ENCODE measurements at regions of chr20 and their contacts with region 1.

Region 1: GRCh38 chr20:5191829-5192569 is 65.2 kb downstream of the CDS2 start:
- DNase-seq: peak; percentile 81 to 89
- ATAC-seq: peak; percentile 72 to 87
- H3K4me3 ChIP-seq: no peak overlapping the region
- H3K27ac ChIP-seq: peak overlapping the region in 1 of 2 experiments; percentile 35; a peak in 1 of 6 replicates
- H3K4me1 ChIP-seq: 0 out of 3 replicates have a peak, but pooled peaks cover 3% of the 10 kb centered on the region
- CTCF ChIP-seq: peak; percentile 96
- EP300 ChIP-seq: no peak
- POLR2A ChIP-seq: no peak
- RAD21 ChIP-seq: peak; percentile 92 to 94

Region 2: DNA sequence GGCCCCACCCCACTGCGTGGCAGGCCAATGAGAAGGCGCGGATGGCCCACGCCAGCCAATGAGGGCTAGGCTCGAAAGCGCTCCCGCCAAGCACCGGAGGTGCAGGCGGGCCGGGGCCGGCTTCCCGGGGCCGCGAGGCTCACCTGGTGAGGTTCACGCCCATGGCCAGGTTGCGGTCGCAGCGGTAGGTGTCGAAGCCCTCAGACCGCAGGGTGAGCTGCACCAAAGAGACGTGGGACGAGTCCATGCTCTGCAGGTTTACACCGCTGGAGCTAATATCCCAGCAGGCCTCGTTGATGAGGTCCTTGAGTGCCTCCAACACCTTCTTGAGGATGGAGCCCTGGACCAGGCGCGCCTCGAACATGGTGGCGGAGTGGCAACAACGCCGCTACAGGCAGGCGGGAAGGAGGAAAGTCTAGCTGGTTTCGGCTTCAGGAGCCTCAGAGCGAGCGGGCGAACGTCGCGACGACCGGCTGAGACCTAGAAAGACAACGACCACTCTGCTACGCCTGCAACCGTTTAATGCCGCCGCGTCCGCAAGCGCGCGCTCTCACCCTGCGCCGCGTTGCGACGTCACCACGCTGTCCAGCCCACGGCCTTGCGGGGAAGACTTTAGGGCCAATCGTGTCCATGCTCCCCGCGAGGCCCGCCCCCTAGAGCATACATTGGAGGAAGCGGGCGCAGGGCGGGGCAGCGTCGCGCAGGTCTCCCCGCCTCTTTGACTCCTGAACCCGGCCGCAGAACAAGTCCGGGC is 72.4 kb before region 1 on chr20 and contains the start of gene PCNA:
- CTCF ChIA-PET with region 1: interaction called, 200 read pairs
- POLR2A ChIA-PET with region 1: interaction called, 14 read pairs
- DNase-seq: peak; percentile 99
- ATAC-seq: peak; percentile 96 to 97
- H3K4me3 ChIP-seq: peak within 1 kb of the TSS; percentile 78
- H3K27ac ChIP-seq: peak within 1 kb of the TSS; percentile 85 to 90
- H3K4me1 ChIP-seq: peaks cover 31% of the 10 kb centered on the region
- CTCF ChIP-seq: no peak; the same call in 2 of the 3 replicates
- EP300 ChIP-seq: no peak
- POLR2A ChIP-seq: peak; percentile 99
- RAD21 ChIP-seq: no peak
- polyA plus RNA-seq, gene PCNA: 388 and 450 TPM in 2 replicates

Region 3: GRCh38 chr20:5135363-5136012 is 56.5 kb before region 1 on chr20:
- CTCF ChIA-PET with region 1: interaction called, 200 read pairs
- POLR2A ChIA-PET with region 1: interaction called, 3 read pairs
- DNase-seq: no peak
- ATAC-seq: peak in 1 of 2 experiments; percentile 31; a peak in 3 of 6 replicates
- H3K4me3 ChIP-seq: no peak overlapping the region
- H3K27ac ChIP-seq: no peak overlapping the region
- H3K4me1 ChIP-seq: no peaks in the 10 kb centered on the region
- CTCF ChIP-seq: no peak
- EP300 ChIP-seq: no peak
- POLR2A ChIP-seq: no peak
- RAD21 ChIP-seq: no peak

Region 4: DNA sequence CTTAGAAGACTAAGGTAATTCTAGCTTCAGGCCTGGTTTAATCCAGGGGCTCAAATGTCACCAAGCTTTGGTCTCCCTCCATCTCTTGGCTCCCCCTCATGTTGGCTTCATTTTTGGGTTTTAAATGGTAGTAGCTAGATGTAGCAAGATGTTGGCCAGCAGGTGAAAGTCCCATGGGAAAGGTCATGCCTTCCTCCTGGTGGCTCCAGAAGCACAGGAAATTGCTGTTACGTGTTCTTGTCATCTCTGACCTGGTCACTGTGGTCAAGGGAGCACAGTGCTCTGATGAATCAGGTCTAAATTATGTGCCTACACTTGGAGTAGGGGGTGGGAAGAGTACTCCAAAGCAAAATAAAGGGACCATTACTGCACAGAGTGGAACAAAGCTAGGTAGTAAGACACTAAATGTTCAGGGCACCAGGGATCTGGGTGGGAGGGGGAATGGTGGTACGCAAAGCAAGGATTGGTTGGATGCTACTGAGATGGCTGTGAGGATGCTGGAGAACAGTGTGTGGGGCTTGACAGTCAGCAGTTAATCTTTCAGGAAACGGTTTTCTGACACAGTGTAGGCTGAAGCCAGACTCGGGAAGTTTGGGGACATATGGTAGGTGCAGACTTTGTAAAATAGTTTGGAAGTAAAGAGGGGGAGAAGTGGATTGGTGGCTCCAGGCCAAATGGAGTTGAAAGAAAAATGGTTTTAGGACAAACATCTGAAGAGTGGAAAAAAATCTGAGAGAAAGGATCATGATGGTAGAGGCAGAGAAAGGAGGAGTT is 35.1 kb before region 1 on chr20:
- CTCF ChIA-PET with region 1: interaction called, 43 read pairs
- POLR2A ChIA-PET with region 1: no interaction called
- DNase-seq: peak in 1 of 2 experiments; percentile 27
- ATAC-seq: peak; percentile 37 to 43; a peak in 2 of 6 replicates
- H3K4me3 ChIP-seq: no peak overlapping the region
- H3K27ac ChIP-seq: peak overlapping the region in 1 of 2 experiments; percentile 22; a peak in 1 of 6 replicates
- H3K4me1 ChIP-seq: peaks cover 37% of the 10 kb centered on the region
- CTCF ChIP-seq: no peak
- EP300 ChIP-seq: no peak
- POLR2A ChIP-seq: no peak
- RAD21 ChIP-seq: no peak

Region 5: DNA sequence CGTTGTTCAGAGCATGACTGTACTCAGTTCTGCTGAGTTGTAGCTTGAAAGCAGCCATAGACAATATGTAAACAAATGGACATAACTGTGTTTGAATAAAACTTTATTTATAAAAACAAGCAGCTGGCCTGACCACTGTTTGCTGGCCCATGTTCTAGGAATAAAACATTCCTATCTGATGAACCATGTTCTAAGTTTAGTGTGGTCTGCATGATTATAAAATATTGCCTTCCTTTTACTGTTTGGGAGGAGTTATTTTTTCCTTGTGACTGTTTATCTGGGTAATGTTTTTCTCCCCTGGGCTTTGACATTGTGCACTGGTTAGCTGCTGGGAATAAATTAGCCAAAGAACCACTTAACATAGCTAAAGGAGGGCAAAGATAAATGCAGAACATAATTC is 10.0 kb before region 1 on chr20:
- CTCF ChIA-PET with region 1: interaction called, 56 read pairs
- POLR2A ChIA-PET with region 1: no interaction called
- DNase-seq: peak in 1 of 2 experiments; percentile 22
- ATAC-seq: no peak
- H3K4me3 ChIP-seq: no peak overlapping the region
- H3K27ac ChIP-seq: no peak overlapping the region
- H3K4me1 ChIP-seq: 0 out of 3 replicates have a peak, but pooled peaks cover 10% of the 10 kb centered on the region
- CTCF ChIP-seq: no peak
- EP300 ChIP-seq: no peak
- POLR2A ChIP-seq: no peak
- RAD21 ChIP-seq: no peak